SK-N-SH (cell line): ENCODE measurements at regions of chr5 and their contacts with region 1.

Region 1: DNA sequence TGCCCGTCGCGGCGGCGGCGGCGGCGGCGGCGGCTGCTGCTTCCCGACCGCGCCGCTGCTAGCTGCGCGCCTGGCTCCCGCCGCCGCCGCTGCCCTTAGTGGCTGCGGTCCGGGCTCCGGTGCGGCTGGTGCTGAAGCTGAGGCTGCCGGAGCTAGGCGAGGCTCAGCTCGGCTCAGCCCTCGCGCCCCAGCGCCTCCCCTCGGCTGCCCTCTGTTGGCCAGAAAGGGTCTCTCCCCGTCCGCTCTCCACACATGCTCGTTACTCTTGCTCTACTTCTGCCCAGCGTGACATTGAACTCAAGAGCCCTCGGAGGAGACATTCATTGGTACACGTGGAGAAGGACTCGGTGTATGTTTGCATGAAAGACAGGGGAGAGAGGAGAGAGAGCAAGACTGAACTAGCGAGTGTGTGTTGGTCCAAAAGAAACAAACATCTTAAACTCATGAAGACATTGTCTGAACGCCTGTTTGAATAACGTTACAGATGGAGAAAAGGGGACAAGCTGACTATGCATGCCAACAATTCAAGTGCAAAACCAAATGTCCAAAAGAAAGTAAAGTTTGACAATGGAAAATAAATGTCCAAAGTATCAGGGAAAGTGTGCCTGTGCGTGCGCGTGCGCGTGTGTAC is at the start of gene HCN1:
- DNase-seq: peak; percentile 81
- H3K4me3 ChIP-seq: peak within 1 kb of the TSS in 1 of 2 experiments; percentile 31; a peak in 3 of 4 replicates
- H3K27ac ChIP-seq: no peak within 1 kb of the TSS
- H3K4me1 ChIP-seq: no peaks in the 10 kb centered on the region
- H3K27me3 ChIP-seq: peaks cover 9% of the 10 kb centered on the region; the same call in 1 of the 2 replicates
- CTCF ChIP-seq: peak; percentile 74
- EP300 ChIP-seq: no peak
- RAD21 ChIP-seq: peak; percentile 55
- polyA plus RNA-seq, gene HCN1: not detected in 2 replicates

Region 2: GRCh38 chr5:45038366-45038987 is 657.8 kb before region 1 on chr5:
- CTCF ChIA-PET with region 1: interaction called, 14 read pairs
- POLR2A ChIA-PET with region 1: no interaction called
- DNase-seq: peak; percentile 14
- H3K4me3 ChIP-seq: no peak overlapping the region; a peak in 1 of 4 replicates
- H3K27ac ChIP-seq: no peak overlapping the region
- H3K4me1 ChIP-seq: no peaks in the 10 kb centered on the region
- H3K27me3 ChIP-seq: no peaks in the 10 kb centered on the region
- CTCF ChIP-seq: peak; percentile 79
- EP300 ChIP-seq: no peak
- RAD21 ChIP-seq: peak; percentile 71